HEK293T (cell line): ENCODE measurements at regions of chr14 and their contacts with region 1.

Region 1: GRCh38 chr14:99982537-99983250 is 82.5 kb upstream of the EVL start:
- DNase-seq: peak; percentile 66

Region 2: GRCh38 chr14:100025111-100025510 is 42.4 kb after region 1 on chr14:
- CTCF ChIA-PET with region 1: interaction called, 21 read pairs
- POLR2A ChIA-PET with region 1: no interaction called
- DNase-seq: peak; percentile 57

Region 3: GRCh38 chr14:100108042-100108825 is 125.5 kb after region 1 on chr14:
- CTCF ChIA-PET with region 1: interaction called, 17 read pairs
- POLR2A ChIA-PET with region 1: no interaction called
- DNase-seq: peak; percentile 88